B cell (primary cell): ENCODE measurements at regions of chr7 and their contacts with region 1.

Region 1: GRCh38 chr7:6637544-6638229 is 569 bp downstream of the ZNF316 start:
- DNase-seq: peak; percentile 86
- ATAC-seq: peak; percentile 86
- H3K4me3 ChIP-seq: peak overlapping the region in 4 of 5 experiments; percentile 37 to 69 (median 61)
- H3K4me3 Mint-ChIP-seq: peak overlapping the region; percentile 86
- H3K27ac ChIP-seq: peak overlapping the region; percentile 18 to 79
- H3K27ac Mint-ChIP-seq: peak overlapping the region; percentile 88
- H3K4me1 ChIP-seq: peaks cover 20 to 25% of the 10 kb centered on the region in 2 donors
- H3K4me1 Mint-ChIP-seq: peaks cover 35% of the 10 kb centered on the region
- H3K27me3 ChIP-seq: no peaks in the 10 kb centered on the region
- H3K27me3 Mint-ChIP-seq: no peaks in the 10 kb centered on the region
- CTCF ChIP-seq: peak; percentile 69

Region 2: DNA sequence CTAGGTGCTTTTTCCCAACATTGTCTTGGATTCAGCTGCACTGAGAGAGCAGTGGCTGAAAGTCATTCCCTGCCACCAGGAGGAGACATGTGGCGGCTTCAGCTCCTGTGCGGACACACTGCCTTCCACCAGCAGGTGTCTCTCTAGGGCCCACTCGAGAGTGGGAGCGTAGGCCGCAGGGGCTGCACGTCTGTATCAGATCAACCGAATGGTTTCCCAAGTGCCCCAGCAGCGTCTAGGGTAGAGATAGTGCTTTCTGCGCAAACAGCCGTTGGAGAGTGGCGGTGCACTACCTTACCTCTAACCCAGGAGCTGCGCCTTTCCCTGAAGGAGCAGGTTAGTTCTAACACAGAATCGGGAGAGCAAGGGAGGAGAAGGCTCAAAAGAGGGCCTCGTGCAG is 1807.5 kb before region 1 on chr7:
- CTCF ChIA-PET with region 1: no interaction called
- POLR2A ChIA-PET with region 1: no interaction called
- intact Hi-C with region 1: no loop called
- DNase-seq: peak; percentile 63
- ATAC-seq: peak; percentile 72
- H3K4me3 ChIP-seq: no peak overlapping the region
- H3K4me3 Mint-ChIP-seq: no peak overlapping the region
- H3K27ac ChIP-seq: no peak overlapping the region
- H3K27ac Mint-ChIP-seq: no peak overlapping the region
- H3K4me1 ChIP-seq: no peaks in the 10 kb centered on the region
- H3K4me1 Mint-ChIP-seq: no peaks in the 10 kb centered on the region
- H3K27me3 ChIP-seq: no peaks in the 10 kb centered on the region
- H3K27me3 Mint-ChIP-seq: no peaks in the 10 kb centered on the region
- CTCF ChIP-seq: peak; percentile 64

Region 3: DNA sequence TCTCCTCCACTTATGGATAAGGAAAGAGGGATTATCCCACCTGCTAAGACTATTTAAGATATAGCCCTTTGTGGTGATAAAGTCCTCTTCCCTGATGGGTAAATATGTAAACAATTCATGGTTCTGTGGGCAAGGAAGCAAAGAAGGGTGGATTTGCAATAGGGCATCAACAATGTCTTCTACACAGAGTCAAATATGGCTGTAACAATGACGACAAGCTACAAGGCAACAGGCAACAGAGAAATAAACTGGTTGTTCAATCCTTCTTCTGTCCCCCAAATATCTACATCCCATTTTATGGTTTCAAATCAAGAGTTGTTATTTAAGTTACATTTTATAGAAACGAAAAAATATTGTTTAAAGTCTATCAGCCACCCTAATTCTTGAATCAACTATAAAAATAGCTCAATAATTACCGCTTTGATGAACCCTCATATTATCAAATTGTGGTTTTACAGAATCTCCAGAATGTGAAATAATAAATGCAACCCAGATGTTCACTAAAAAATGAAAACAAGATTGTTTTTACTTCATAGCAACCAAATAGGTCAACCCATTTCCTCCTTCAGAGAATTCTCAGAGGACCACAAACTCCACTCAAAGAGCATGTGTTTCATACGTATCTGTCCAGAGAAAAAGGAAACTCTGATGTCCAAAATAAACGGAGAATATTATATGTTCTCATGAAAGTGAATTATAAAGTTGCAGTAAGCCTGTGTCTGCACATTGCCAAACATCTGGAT is 379.1 kb before region 1 on chr7:
- CTCF ChIA-PET with region 1: no interaction called
- POLR2A ChIA-PET with region 1: no interaction called
- intact Hi-C with region 1: no loop called
- DNase-seq: peak; percentile 45
- ATAC-seq: peak; percentile 56
- H3K4me3 ChIP-seq: peak overlapping the region in 1 of 5 experiments; percentile 18
- H3K4me3 Mint-ChIP-seq: peak overlapping the region; percentile 81
- H3K27ac ChIP-seq: peak overlapping the region; percentile 25 to 70
- H3K27ac Mint-ChIP-seq: peak overlapping the region; percentile 83
- H3K4me1 ChIP-seq: peaks cover 23 to 33% of the 10 kb centered on the region in 2 donors
- H3K4me1 Mint-ChIP-seq: peaks cover 46% of the 10 kb centered on the region
- H3K27me3 ChIP-seq: no peaks in the 10 kb centered on the region
- H3K27me3 Mint-ChIP-seq: no peaks in the 10 kb centered on the region
- CTCF ChIP-seq: no peak

Region 4: GRCh38 chr7:6558837-6559236 is 78.8 kb before region 1 on chr7:
- CTCF ChIA-PET with region 1: no interaction called
- POLR2A ChIA-PET with region 1: no interaction called
- intact Hi-C with region 1: no loop called
- DNase-seq: no peak
- ATAC-seq: no peak
- H3K4me3 ChIP-seq: no peak overlapping the region
- H3K4me3 Mint-ChIP-seq: no peak overlapping the region
- H3K27ac ChIP-seq: no peak overlapping the region
- H3K27ac Mint-ChIP-seq: no peak overlapping the region
- H3K4me1 ChIP-seq: peaks cover 3 to 11% of the 10 kb centered on the region in 2 donors
- H3K4me1 Mint-ChIP-seq: peaks cover 6% of the 10 kb centered on the region
- H3K27me3 ChIP-seq: no peaks in the 10 kb centered on the region
- H3K27me3 Mint-ChIP-seq: peaks cover 6% of the 10 kb centered on the region
- CTCF ChIP-seq: no peak

Region 5: DNA sequence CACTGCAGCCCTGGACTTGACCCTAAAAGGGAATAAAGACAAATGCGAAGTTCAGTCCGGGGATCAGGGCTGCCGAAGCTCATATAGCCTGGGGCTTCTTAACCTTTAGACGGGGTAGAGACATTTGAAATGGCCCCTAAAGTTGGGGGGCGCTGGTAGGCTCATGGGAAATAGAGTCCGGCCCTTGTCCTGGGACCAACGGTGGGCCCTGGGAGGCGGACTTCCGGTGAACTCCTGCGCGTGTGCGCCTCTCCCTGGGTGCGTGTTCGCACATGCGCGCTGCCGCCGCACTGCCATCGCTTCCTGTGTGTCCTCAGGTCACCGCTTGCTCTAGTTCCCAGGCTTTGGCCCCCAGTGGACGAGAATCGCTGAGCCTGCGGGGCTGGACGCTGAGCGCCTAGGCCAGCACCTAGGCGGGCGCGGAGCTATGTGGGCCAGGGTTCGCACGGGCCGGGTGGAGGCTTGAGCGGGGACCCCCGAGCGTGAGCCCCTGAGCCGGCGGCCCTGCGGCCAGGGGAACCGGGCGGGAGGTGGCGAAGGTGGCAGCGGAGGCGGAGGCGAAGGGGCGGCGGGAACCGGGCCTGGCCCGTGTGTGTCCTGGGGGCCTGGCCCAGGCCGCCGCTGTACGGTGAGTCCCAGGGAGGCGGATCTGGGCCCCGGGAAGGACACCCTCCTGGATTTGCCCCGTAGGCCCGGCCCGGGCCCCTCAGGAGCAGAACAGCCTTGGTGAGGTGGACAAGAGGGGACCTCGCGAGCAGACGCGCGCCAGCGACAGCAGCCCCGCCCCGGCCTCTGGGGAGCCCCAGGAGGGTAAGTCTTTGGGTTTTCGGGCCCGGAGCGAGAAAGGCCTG is 92.0 kb after region 1 on chr7:
- CTCF ChIA-PET with region 1: no interaction called
- POLR2A ChIA-PET with region 1: no interaction called
- intact Hi-C with region 1: loop called (anchors 1 kb)
- DNase-seq: peak; percentile 88
- ATAC-seq: peak; percentile 91
- H3K4me3 ChIP-seq: peak overlapping the region; percentile 52 to 93 (median 74)
- H3K4me3 Mint-ChIP-seq: peak overlapping the region; percentile 91
- H3K27ac ChIP-seq: peak overlapping the region; percentile 69 to 78
- H3K27ac Mint-ChIP-seq: peak overlapping the region; percentile 85
- H3K4me1 ChIP-seq: peaks cover 23 to 33% of the 10 kb centered on the region in 2 donors
- H3K4me1 Mint-ChIP-seq: peaks cover 34% of the 10 kb centered on the region
- H3K27me3 ChIP-seq: no peaks in the 10 kb centered on the region
- H3K27me3 Mint-ChIP-seq: no peaks in the 10 kb centered on the region
- CTCF ChIP-seq: no peak